Dendritic cell treated with granulocyte-macrophage colony-stimulating factor and Interleukin-4, amounts not matched to agents 40 ng/mL and 50 ng/mL, for 4 days (primary cell): ENCODE measurements at regions of chr2 and their contacts with region 1.

Region 1: GRCh38 chr2:200703127-200703925 is 108.4 kb upstream of the BZW1 start:
- H3K4me3 Mint-ChIP-seq: no peak overlapping the region
- H3K27ac Mint-ChIP-seq: no peak overlapping the region
- H3K4me1 Mint-ChIP-seq: no peaks in the 10 kb centered on the region
- H3K27me3 Mint-ChIP-seq: no peaks in the 10 kb centered on the region

Region 2: GRCh38 chr2:200578778-200579177 is 124.5 kb before region 1 on chr2:
- intact Hi-C with region 1: loop called (anchors 1 kb)
- H3K4me3 Mint-ChIP-seq: no peak overlapping the region
- H3K27ac Mint-ChIP-seq: no peak overlapping the region
- H3K4me1 Mint-ChIP-seq: no peaks in the 10 kb centered on the region
- H3K27me3 Mint-ChIP-seq: no peaks in the 10 kb centered on the region